ENCODE measurements at regions of chr19 and their contacts with region 1.

Region 1: DNA sequence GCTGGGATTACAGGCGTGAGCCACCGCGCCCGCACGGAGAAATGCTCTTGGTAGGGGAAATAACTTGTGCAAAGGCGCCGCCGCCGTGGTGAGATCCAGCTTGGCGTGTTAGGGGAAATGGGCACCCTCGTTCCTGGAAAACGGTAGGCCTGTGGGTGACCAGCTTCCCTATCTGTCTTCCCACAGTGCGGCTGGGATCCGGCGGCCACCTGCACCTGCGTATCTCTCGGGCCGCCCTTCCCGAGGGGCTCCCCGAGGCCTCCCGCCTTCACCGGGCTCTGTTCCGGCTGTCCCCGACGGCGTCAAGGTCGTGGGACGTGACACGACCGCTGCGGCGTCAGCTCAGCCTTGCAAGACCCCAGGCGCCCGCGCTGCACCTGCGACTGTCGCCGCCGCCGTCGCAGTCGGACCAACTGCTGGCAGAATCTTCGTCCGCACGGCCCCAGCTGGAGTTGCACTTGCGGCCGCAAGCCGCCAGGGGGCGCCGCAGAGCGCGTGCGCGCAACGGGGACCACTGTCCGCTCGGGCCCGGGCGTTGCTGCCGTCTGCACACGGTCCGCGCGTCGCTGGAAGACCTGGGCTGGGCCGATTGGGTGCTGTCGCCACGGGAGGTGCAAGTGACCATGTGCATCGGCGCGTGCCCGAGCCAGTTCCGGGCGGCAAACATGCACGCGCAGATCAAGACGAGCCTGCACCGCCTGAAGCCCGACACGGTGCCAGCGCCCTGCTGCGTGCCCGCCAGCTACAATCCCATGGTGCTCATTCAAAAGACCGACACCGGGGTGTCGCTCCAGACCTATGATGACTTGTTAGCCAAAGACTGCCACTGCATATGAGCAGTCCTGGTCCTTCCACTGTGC is 2.4 kb downstream of the GDF15 start:
- DNase-seq: peak; percentile 88
- H3K4me3 ChIP-seq: peak overlapping the region in 3 of 4 donors; percentile 30 to 41 (median 36)
- H3K27ac ChIP-seq: peak overlapping the region in 3 of 4 donors; percentile 22 to 48 (median 46)
- H3K4me1 ChIP-seq: peaks cover 0 to 20% (median 13%) of the 10 kb centered on the region in 4 donors
- H3K27me3 ChIP-seq: peaks cover 0 to 37% (median 2%) of the 10 kb centered on the region in 3 donors
- CTCF ChIP-seq: peak; percentile 96 to 100 (median 98)
- EP300 ChIP-seq: no peak
- POLR2A ChIP-seq: no peak

Region 2: GRCh38 chr19:18408053-18408476 is 19.7 kb after region 1 on chr19:
- intact Hi-C with region 1: loop called (anchors 1 kb)
- DNase-seq: no peak
- H3K4me3 ChIP-seq: no peak overlapping the region
- H3K27ac ChIP-seq: no peak overlapping the region
- H3K4me1 ChIP-seq: no peaks in the 10 kb centered on the region
- H3K27me3 ChIP-seq: no peaks in the 10 kb centered on the region
- CTCF ChIP-seq: peak in 1 of 4 experiments; percentile 22
- EP300 ChIP-seq: no peak
- POLR2A ChIP-seq: no peak

Measured in sigmoid colon (tissue), 7 donors.